Activated CD4-positive, alpha-beta memory T cell treated with anti-CD3 and anti-CD28 coated beads, Interleukin-2, amount 10 ng/mL, durations not matched to agents 7 days and 5 days (primary cell): ENCODE measurements at regions of chr17 and their contacts with region 1.

Region 1: DNA sequence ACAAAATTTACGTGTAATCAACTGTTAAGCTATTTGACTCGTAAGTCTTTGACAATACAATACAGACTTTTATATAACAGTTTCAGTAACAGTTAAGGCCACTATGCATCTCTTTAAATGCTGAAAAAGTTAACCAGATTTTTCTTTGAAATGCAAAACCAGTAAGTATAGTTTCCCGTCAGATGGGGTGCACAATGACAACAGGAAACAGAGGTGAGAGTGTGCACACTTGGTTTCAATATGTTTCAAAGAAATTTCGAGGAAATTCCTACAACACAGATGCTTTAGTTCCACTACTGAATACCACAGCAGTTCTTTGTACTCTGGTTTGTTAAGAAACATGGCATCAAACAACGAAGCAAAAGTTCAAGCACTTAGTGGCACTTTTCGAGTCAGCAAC is 48.4 kb downstream of the RNF157 start:
- DNase-seq: peak; percentile 59
- H3K4me3 Mint-ChIP-seq: peak overlapping the region; percentile 62
- H3K27ac Mint-ChIP-seq: peak overlapping the region; percentile 96
- H3K4me1 Mint-ChIP-seq: peaks cover 88% of the 10 kb centered on the region
- H3K27me3 Mint-ChIP-seq: no peaks in the 10 kb centered on the region

Region 2: GRCh38 chr17:76147211-76148014 is 44.5 kb before region 1 on chr17:
- CTCF ChIA-PET with region 1: interaction called, 7 read pairs
- POLR2A ChIA-PET with region 1: interaction called, 23 read pairs
- DNase-seq: no peak
- H3K4me3 Mint-ChIP-seq: no peak overlapping the region
- H3K27ac Mint-ChIP-seq: peak overlapping the region; percentile 56
- H3K4me1 Mint-ChIP-seq: peaks cover 68% of the 10 kb centered on the region
- H3K27me3 Mint-ChIP-seq: no peaks in the 10 kb centered on the region

Region 3: DNA sequence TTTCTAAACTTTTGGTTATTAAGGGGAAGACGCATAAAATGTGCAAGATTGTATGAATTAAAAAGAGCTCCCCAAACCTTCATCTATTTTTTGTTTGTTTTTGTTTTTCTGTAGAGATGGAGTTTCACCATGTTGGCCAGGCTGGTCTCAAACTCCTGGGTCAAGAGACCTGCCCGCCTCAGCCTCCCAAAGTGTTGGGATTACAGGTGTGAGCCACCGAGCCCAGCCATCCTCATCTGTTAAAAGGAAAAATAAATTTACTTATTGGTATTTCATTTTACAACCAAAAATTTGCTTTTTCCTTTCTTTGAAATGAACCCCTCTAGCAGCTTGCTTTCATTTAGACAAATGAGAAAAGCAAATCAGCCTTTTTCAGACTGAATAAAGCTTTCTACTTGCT is 25.2 kb after region 1 on chr17:
- CTCF ChIA-PET with region 1: no interaction called
- POLR2A ChIA-PET with region 1: interaction called, 18 read pairs
- DNase-seq: no peak
- H3K4me3 Mint-ChIP-seq: no peak overlapping the region
- H3K27ac Mint-ChIP-seq: no peak overlapping the region
- H3K4me1 Mint-ChIP-seq: peaks cover 39% of the 10 kb centered on the region
- H3K27me3 Mint-ChIP-seq: no peaks in the 10 kb centered on the region

Region 4: DNA sequence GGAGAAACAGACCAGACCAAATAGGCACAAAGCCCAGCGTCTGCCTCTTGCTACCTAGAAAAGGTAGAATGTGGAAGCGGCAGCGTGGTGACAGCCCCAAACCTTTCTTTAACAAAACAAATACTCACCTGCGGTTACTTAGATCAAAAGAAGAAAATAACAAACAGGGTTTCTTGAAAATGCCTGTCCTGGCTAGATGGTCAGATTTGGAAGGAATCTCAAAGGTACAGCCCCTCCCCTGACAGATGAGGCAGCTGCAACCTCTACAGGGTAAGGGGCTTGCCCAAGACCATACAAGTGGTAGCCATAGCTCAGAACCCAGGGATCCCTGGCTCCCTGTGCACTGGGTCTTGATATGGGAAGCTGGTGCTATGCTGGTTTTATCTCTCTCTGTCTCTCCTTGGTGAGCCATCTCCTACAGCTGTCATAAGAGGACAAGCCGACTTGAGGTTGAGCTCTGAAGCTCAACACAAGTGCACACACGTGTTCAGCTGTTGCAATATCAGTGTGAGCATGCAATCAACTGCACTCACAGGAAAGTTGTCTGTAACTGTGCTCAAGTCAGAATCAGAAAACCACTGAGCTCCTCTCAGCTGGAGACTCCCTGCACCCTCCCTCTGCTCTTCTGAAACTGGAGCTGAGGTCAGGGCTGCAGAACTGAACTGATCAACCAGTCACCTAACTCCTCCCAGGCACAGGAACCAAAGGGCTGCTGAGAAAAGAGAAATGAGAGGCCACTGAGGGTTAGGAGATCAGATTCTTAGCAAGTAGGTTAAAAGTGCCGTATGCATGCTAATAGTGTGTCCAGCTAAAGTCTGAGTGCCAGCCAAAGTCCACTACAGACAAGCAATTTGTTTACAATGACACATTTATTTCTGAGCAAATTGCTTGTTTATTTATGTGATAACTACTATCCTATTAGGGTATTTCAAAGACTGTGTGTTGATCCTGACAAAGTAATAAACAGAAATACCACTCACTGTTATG is 54.5 kb after region 1 on chr17:
- CTCF ChIA-PET with region 1: interaction called, 24 read pairs
- POLR2A ChIA-PET with region 1: interaction called, 104 read pairs
- DNase-seq: peak; percentile 87
- H3K4me3 Mint-ChIP-seq: peak overlapping the region; percentile 32
- H3K27ac Mint-ChIP-seq: peak overlapping the region; percentile 94
- H3K4me1 Mint-ChIP-seq: peaks cover 82% of the 10 kb centered on the region
- H3K27me3 Mint-ChIP-seq: peaks cover 5% of the 10 kb centered on the region